ENCODE measurements at regions of chr11 and their contacts with region 1.

Region 1: DNA sequence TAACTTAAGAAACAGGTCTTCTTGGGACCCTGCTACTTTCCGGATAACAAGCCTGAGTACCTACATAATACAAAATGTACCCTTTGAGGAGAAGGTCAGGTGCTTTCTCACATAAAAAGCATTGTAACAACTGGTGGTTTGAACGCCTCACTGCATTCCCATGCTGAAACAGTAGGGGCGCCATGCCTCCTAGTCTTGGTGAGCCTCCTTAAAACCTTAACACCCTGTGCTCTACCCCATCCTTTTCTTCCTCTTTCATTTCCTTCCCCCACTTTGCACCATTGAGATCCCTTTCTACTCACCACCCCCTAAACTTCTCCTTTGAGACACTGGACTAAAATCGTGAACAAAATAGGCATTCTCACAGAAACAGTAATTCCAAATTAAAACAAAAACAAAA is 729.3 kb downstream of the NTM start:
- DNase-seq: no peak
- H3K4me3 ChIP-seq: no peak overlapping the region
- H3K27ac ChIP-seq: no peak overlapping the region
- H3K4me1 ChIP-seq: no peaks in the 10 kb centered on the region
- H3K27me3 ChIP-seq: no peaks in the 10 kb centered on the region
- CTCF ChIP-seq: no peak
- POLR2A ChIP-seq: no peak

Region 2: DNA sequence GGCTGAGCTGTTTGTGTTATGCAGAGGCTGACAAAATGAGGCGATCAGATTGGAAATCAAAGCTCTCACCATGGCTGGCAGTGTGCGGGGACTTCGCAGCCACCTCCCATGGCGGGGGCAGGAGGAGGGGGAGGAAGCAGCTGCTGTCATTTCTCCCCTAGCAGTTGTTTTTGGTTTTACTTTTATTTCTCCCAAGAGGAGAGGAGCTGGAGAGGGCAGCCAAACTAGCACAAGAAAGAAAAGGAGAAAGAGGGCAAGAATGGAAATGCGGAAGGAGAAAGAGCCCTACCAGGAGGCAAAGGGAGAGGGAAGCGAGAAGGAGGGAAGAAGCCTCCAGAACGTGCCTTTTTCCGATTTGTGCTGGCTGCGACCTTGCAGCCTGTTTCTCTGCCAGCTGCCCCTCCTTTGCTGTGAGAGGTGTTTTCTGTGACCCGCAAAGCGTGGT is 26.8 kb after region 1 on chr11:
- intact Hi-C with region 1: loop called (anchors 2 kb)
- DNase-seq: no peak
- H3K4me3 ChIP-seq: peak overlapping the region; percentile 35 to 60 (median 41)
- H3K27ac ChIP-seq: peak overlapping the region in 1 of 2 donors; percentile 38
- H3K4me1 ChIP-seq: no peaks in the 10 kb centered on the region
- H3K27me3 ChIP-seq: peaks cover 0 to under 1% of the 10 kb centered on the region in 2 donors
- CTCF ChIP-seq: no peak
- POLR2A ChIP-seq: no peak

Measured in breast epithelium (tissue), 4 donors.